ENCODE measurements at regions of chr7 and their contacts with region 1.

Region 1: DNA sequence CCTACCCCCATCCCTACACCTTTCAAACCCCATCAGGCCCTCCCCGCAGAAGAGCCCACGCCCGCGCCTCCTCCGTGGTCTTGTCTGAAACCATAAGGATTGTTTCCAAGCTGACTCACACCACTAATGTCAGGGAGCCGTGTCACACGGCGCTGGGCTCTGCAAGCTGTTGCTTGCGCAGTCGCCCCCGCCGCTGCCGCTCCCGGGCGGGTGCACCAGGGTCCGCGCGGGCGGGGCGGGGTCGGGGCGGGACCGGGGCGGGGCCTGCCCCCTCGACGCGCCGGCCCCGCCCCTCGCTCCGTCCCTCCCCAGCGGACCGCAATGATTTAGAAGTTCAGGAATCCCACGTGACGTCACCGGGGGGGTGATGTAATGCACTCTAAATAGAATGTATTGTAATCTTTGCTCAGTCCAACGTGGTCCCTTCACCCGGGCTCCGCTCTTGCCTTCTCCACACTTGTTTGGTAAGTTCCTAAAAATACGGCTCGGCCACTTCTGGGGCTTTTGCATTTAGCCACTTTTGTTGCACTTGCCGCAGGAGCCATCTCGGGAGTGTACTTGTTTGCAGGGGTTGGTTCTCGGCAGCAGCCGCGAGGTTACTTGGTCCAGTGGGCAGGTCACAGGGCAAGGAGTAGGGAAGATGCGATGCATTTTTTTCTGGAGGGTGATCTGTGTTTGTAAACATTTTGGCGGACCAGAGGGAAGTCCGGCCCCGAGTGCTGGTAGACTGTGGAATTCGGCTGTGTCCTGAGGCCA is 3.2 kb upstream of the CREB5 start:
- DNase-seq: peak; percentile 88 to 99 (median 96)

Region 2: DNA sequence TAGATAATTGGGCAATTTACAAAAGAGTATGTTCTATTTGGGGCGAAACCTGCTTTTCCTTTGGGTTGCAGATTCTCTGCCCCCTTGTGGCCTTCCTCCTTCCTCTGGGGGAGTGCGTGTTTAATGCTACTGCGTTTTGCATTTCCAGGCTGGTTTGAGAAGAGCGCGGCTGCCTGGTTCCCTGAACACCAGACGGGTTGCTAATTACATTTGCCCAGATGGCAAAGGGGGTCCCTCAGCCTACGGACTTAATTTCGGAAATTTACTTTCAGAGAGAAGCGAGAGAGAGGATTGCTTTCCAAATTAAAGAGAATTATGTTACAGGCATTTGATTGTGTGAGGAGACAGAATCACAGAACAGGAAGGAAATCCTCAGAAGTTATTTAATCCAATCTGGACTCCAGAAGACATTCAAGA is 136.7 kb before region 1 on chr7:
- intact Hi-C with region 1: no loop called
- DNase-seq: peak; percentile 37 to 87 (median 70)

Region 3: GRCh38 chr7:28685644-28686417 is 276.7 kb after region 1 on chr7:
- intact Hi-C with region 1: loop called (anchors 10 kb)
- DNase-seq: peak; percentile 67 to 98 (median 93)

Region 4: GRCh38 chr7:28768628-28769027 is 359.5 kb after region 1 on chr7:
- intact Hi-C with region 1: loop called (anchors 10 kb)
- DNase-seq: no peak